CD4-positive, alpha-beta memory T cell (primary cell): ENCODE measurements at regions of chr6 and their contacts with region 1.

Region 1: DNA sequence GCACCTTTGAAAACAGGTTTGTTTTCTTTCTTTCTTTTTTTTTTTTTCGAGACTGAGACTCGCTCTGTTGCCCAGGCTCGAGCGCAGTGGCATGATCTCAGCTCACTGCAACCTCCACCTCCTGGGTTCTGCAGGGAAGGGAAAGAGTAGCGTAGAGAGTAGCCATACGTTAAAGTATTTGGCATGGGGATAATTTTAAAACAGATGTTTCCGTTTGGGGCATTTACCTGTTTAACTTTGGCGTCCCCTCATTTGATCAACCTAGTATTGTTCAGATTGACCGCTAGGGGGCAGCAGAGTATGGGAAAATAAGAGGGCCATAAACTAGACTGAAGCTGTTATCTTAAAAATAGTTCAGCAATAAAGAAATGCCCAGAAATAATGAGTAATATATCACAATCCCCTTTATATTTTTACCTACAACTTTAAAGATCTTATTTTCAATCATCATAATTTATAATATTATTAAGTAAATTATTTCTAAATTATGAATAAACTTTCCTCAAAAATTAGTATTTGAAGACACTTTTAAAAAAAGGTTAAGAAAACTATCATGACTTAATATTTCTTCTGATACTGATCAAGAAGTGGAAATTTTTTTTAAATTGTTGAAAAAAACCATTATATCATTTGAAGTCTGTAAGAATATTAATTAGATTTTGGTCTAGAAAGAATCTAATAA is 7.6 kb upstream of the TAAR9 start:
- DNase-seq: peak; percentile 54 to 66 (median 59)
- H3K4me3 ChIP-seq: no peak overlapping the region
- H3K4me3 Mint-ChIP-seq: peak overlapping the region in 3 of 8 donors; percentile 18 to 57 (median 42)
- H3K27ac ChIP-seq: no peak overlapping the region
- H3K27ac Mint-ChIP-seq: no peak overlapping the region
- H3K4me1 ChIP-seq: no peaks in the 10 kb centered on the region
- H3K4me1 Mint-ChIP-seq: peaks cover 0 to 2% (median 0%) of the 10 kb centered on the region in 4 donors
- H3K27me3 ChIP-seq: peaks cover 6% of the 10 kb centered on the region
- H3K27me3 Mint-ChIP-seq: peaks cover 14 to 20% of the 10 kb centered on the region in 2 donors

Region 2: DNA sequence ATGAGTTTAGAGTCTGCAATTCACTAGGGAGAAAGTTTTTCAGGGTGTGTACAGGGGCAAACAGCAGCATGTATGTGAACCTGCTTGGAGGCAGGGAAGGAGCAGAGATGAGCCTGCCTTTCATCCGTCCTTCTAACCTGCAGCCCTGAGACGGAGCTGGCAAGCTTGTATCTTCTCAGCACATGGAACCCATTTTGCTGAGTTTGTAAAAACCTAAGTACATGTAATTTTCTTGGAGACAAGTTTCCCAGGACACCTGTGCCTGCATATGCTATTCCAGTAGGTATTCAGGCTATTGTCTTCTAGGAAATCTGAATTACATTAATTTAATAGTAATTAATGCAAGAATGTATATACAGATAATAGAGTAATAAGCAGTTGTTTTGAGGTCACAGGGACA is 100.3 kb before region 1 on chr6:
- CTCF ChIA-PET with region 1: no interaction called
- POLR2A ChIA-PET with region 1: no interaction called
- intact Hi-C with region 1: no loop called
- DNase-seq: no peak
- H3K4me3 ChIP-seq: no peak overlapping the region
- H3K4me3 Mint-ChIP-seq: no peak overlapping the region
- H3K27ac ChIP-seq: no peak overlapping the region
- H3K27ac Mint-ChIP-seq: no peak overlapping the region
- H3K4me1 ChIP-seq: no peaks in the 10 kb centered on the region
- H3K4me1 Mint-ChIP-seq: no peaks in the 10 kb centered on the region
- H3K27me3 ChIP-seq: no peaks in the 10 kb centered on the region
- H3K27me3 Mint-ChIP-seq: peaks cover 7 to 18% of the 10 kb centered on the region in 2 donors

Region 3: GRCh38 chr6:132544826-132545225 is 14.4 kb after region 1 on chr6:
- CTCF ChIA-PET with region 1: interaction called, 16 read pairs
- POLR2A ChIA-PET with region 1: no interaction called
- intact Hi-C with region 1: no loop called
- DNase-seq: no peak
- H3K4me3 ChIP-seq: no peak overlapping the region
- H3K4me3 Mint-ChIP-seq: no peak overlapping the region
- H3K27ac ChIP-seq: no peak overlapping the region
- H3K27ac Mint-ChIP-seq: no peak overlapping the region
- H3K4me1 ChIP-seq: no peaks in the 10 kb centered on the region
- H3K4me1 Mint-ChIP-seq: no peaks in the 10 kb centered on the region
- H3K27me3 ChIP-seq: peaks cover 3% of the 10 kb centered on the region
- H3K27me3 Mint-ChIP-seq: peaks cover 12 to 15% of the 10 kb centered on the region in 2 donors

Region 4: GRCh38 chr6:132768051-132768517 is 237.7 kb after region 1 on chr6:
- CTCF ChIA-PET with region 1: interaction called, 3 read pairs
- POLR2A ChIA-PET with region 1: no interaction called
- intact Hi-C with region 1: loop called (anchors 1 kb)
- DNase-seq: no peak
- H3K4me3 ChIP-seq: no peak overlapping the region
- H3K4me3 Mint-ChIP-seq: no peak overlapping the region
- H3K27ac ChIP-seq: no peak overlapping the region
- H3K27ac Mint-ChIP-seq: peak overlapping the region in 1 of 7 donors; percentile 58
- H3K4me1 ChIP-seq: peaks cover 9% of the 10 kb centered on the region
- H3K4me1 Mint-ChIP-seq: peaks cover 8 to 14% (median 11%) of the 10 kb centered on the region in 4 donors
- H3K27me3 ChIP-seq: no peaks in the 10 kb centered on the region
- H3K27me3 Mint-ChIP-seq: peaks cover 0 to 1% of the 10 kb centered on the region in 2 donors

Region 5: GRCh38 chr6:132813173-132813856 is 282.9 kb after region 1 on chr6:
- CTCF ChIA-PET with region 1: no interaction called
- POLR2A ChIA-PET with region 1: no interaction called
- intact Hi-C with region 1: loop called (anchors 5 kb)
- DNase-seq: peak; percentile 58 to 67 (median 64)
- H3K4me3 ChIP-seq: peak overlapping the region; percentile 78
- H3K4me3 Mint-ChIP-seq: peak overlapping the region; percentile 94 to 100 (median 98)
- H3K27ac ChIP-seq: peak overlapping the region; percentile 76
- H3K27ac Mint-ChIP-seq: peak overlapping the region; percentile 96 to 99 (median 98)
- H3K4me1 ChIP-seq: peaks cover 40% of the 10 kb centered on the region
- H3K4me1 Mint-ChIP-seq: peaks cover 28 to 58% (median 45%) of the 10 kb centered on the region in 4 donors
- H3K27me3 ChIP-seq: no peaks in the 10 kb centered on the region
- H3K27me3 Mint-ChIP-seq: peaks cover 0 to 2% of the 10 kb centered on the region in 2 donors

Region 6: DNA sequence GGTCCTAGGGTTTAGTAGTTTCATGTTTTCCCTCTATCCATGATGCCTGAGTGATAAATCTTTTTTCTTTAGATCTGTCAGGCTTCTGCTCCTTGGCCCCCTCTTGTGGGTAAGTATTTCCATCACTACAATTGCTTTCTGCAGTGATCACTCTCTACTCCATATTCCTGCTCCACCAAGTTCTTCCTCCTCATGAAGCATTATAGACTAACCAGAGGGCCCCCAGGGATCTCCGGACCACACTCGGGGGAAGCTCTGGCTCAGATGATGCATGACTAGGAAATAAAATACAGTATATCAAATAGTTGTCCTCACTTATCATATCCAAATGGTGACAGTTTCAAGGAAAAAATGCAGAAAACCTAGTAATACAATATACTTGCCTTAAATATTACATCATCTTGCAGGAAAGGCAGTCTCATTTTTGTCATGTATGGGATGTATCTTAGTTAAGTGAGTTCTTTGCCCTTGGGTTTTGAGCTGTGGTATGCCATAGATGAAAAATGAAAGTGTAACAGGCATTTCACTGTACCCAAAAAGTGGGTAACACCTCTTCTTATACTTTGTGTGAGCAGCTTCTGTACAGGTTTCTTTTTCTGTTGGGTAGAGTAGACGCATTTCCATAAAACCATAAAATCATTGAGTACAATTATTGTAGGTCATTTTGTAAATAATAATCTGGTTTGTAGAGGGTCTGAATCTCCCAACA is 509.8 kb after region 1 on chr6:
- CTCF ChIA-PET with region 1: no interaction called
- POLR2A ChIA-PET with region 1: no interaction called
- intact Hi-C with region 1: loop called (anchors 2 kb)
- DNase-seq: peak in 1 of 5 donors; percentile 1
- H3K4me3 ChIP-seq: no peak overlapping the region
- H3K4me3 Mint-ChIP-seq: no peak overlapping the region
- H3K27ac ChIP-seq: no peak overlapping the region
- H3K27ac Mint-ChIP-seq: peak overlapping the region in 1 of 7 donors; percentile 18
- H3K4me1 ChIP-seq: no peaks in the 10 kb centered on the region
- H3K4me1 Mint-ChIP-seq: no peaks in the 10 kb centered on the region
- H3K27me3 ChIP-seq: no peaks in the 10 kb centered on the region
- H3K27me3 Mint-ChIP-seq: peaks cover 0 to 2% of the 10 kb centered on the region in 2 donors

Region 7: DNA sequence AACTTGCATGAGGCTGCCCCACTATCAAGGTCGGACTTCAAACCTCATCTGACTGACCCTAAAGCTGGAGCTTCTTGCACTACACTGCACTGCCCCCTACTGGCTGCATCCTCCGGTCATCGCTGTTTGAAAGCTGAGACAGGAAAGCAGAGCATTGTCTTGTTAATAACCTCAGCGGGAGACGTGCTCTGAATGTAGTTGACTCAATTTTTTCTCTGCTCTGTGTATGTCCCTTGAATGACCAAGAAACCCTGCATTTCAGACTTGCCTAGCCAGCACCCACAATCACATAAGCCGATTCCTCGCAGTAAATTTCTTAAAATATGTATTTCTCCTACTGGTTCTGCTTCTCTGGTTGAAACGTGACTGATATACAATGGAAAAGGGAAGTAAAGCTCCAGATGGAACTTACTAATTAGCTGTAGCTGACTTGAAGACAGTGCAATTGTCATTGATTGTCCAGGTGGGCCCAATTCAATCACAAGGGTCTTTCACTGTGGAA is 1386.3 kb after region 1 on chr6:
- CTCF ChIA-PET with region 1: interaction called, 11 read pairs
- POLR2A ChIA-PET with region 1: no interaction called
- intact Hi-C with region 1: no loop called
- DNase-seq: peak; percentile 49 to 61 (median 56)
- H3K4me3 ChIP-seq: no peak overlapping the region
- H3K4me3 Mint-ChIP-seq: peak overlapping the region in 2 of 8 donors; percentile 7 to 37
- H3K27ac ChIP-seq: no peak overlapping the region
- H3K27ac Mint-ChIP-seq: no peak overlapping the region
- H3K4me1 ChIP-seq: no peaks in the 10 kb centered on the region
- H3K4me1 Mint-ChIP-seq: peaks cover 0 to 4% (median 2%) of the 10 kb centered on the region in 4 donors
- H3K27me3 ChIP-seq: no peaks in the 10 kb centered on the region
- H3K27me3 Mint-ChIP-seq: peaks cover 4 to 6% of the 10 kb centered on the region in 2 donors